Dorsolateral prefrontal cortex (tissue), 120 donors: ENCODE measurements at regions of chr6 and their contacts with region 1.

Region 1: GRCh38 chr6:53484476-53485280 is 60.2 kb downstream of the GCLC start:
- DNase-seq: peak in 6 of 10 donors; percentile 50 to 89 (median 66)
- H3K4me3 ChIP-seq: peak overlapping the region in 44 of 59 donors; percentile 1 to 59 (median 34)
- H3K27ac ChIP-seq: peak overlapping the region; percentile 16 to 95 (median 82)
- H3K27me3 ChIP-seq: no peaks in the 10 kb centered on the region
- CTCF ChIP-seq: peak; percentile 89 to 100 (median 98)

Region 2: GRCh38 chr6:52995913-52996645 is 488.6 kb before region 1 on chr6:
- intact Hi-C with region 1: no loop called
- DNase-seq: peak in 7 of 10 donors; percentile 28 to 65 (median 45)
- H3K4me3 ChIP-seq: peak overlapping the region; percentile 2 to 98 (median 81)
- H3K27ac ChIP-seq: peak overlapping the region; percentile 10 to 99 (median 97)
- H3K27me3 ChIP-seq: no peaks in the 10 kb centered on the region
- CTCF ChIP-seq: peak in 1 of 56 donors; percentile 16

Region 3: GRCh38 chr6:53103992-53104675 is 380.5 kb before region 1 on chr6:
- intact Hi-C with region 1: loop called in 1 of 2 experiments (anchors 2 kb)
- DNase-seq: no peak
- H3K4me3 ChIP-seq: no peak overlapping the region
- H3K27ac ChIP-seq: peak overlapping the region in 2 of 59 donors; percentile 3 to 15
- H3K27me3 ChIP-seq: no peaks in the 10 kb centered on the region
- CTCF ChIP-seq: peak in 48 of 56 donors; percentile 10 to 63 (median 42)

Region 4: GRCh38 chr6:53410508-53411258 is 74.0 kb before region 1 on chr6:
- intact Hi-C with region 1: loop called in 1 of 2 experiments (anchors 2 kb)
- DNase-seq: peak in 4 of 10 donors; percentile 10 to 51 (median 35)
- H3K4me3 ChIP-seq: peak overlapping the region in 3 of 59 donors; percentile 1 to 21 (median 19)
- H3K27ac ChIP-seq: peak overlapping the region in 1 of 59 donors; percentile 0
- H3K27me3 ChIP-seq: peaks cover 0 to 7% (median 0%) of the 10 kb centered on the region in 45 donors
- CTCF ChIP-seq: peak; percentile 18 to 85 (median 64)

Region 5: GRCh38 chr6:53437557-53438202 is 47.0 kb before region 1 on chr6:
- intact Hi-C with region 1: loop called (anchors 2 to 5 kb)
- DNase-seq: peak in 2 of 10 donors; percentile 36 to 38
- H3K4me3 ChIP-seq: no peak overlapping the region
- H3K27ac ChIP-seq: peak overlapping the region in 57 of 59 donors; percentile 20 to 97 (median 88)
- H3K27me3 ChIP-seq: peaks cover 0 to 2% (median 0%) of the 10 kb centered on the region in 45 donors
- CTCF ChIP-seq: peak in 55 of 56 donors; percentile 35 to 84 (median 67)

Region 6: GRCh38 chr6:53603386-53604116 is 118.9 kb after region 1 on chr6:
- intact Hi-C with region 1: no loop called
- DNase-seq: no peak
- H3K4me3 ChIP-seq: peak overlapping the region in 12 of 59 donors; percentile 0 to 35 (median 11)
- H3K27ac ChIP-seq: peak overlapping the region in 49 of 59 donors; percentile 2 to 84 (median 67)
- H3K27me3 ChIP-seq: no peaks in the 10 kb centered on the region
- CTCF ChIP-seq: no peak

Region 7: DNA sequence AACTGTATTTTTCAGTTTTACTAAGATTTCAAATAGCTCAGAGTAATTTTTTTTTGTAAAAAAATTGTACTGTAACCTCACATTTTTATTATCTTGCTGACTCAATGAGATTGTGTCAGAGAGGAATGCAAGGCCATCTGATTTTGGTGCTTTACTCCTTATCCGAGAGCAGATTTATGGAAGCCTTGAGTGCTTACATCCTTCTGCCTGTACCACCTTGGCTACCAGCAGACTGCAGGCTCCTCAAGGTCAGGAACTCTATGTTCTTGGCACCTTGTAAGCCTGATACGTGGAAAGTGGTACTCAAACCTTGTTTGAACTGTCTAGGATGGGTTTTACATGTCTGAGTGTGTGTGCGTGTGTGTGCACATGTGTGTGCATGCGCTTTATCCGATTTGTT is 546.5 kb after region 1 on chr6:
- intact Hi-C with region 1: no loop called
- DNase-seq: no peak
- H3K4me3 ChIP-seq: no peak overlapping the region
- H3K27ac ChIP-seq: no peak overlapping the region
- H3K27me3 ChIP-seq: no peaks in the 10 kb centered on the region
- CTCF ChIP-seq: no peak